K562 (cell line): ENCODE measurements at regions of chr19 and their contacts with region 1.

Region 1: DNA sequence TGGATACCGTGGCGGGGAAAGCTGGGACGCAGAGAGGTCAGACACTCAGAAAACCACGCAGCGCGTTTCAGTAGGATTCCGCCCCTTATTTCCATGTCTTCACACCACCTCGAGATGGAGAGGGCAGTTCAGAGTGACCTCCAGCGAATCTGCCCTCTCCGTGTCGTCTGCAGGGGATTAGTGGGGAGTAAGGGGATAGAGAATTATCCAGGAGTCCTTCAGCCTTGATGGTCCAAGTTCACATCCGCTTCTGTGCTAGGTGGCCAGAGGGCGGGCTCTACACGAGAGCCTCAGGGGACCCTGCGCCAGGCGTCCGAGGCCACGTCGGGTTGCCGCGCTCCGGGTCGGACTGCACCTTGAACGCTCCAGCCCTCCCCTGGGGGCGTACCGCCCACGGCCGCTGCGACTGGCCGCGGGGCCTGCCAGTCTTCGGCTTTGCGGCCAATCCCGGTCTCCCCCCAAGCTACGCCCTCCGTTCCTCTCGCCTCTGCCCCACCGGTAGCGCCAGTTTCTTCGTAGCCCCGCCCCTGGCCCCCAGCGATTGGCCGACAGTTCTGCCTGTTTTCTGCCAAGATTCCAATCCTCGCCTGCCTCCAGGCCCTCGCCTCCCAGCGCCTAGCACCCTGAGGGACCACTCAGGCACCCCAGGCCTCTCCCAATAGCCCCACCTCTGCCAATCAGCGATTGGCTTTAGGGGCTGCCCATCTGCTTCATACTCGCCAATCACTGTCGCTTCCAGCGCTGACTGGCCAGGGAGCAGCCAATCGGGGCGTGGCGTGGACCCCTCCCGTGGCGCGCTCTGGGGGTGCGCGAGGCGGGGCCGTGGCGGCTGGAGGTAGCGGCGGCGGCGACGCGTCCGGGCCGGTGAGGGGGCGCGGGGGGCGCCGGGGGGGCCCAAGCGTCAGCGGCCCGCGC is at the start of gene SLC25A42:
- DNase-seq: peak; percentile 97 to 99 (median 98)
- ATAC-seq: peak; percentile 87
- H3K4me3 ChIP-seq: peak within 1 kb of the TSS; percentile 74
- H3K27ac ChIP-seq: peak within 1 kb of the TSS; percentile 89
- H3K4me1 ChIP-seq: peaks cover 57 to 73% of the 10 kb centered on the region in 2 experiments
- H3K27me3 ChIP-seq: no peaks in the 10 kb centered on the region; a peak in 1 of 5 replicates
- CTCF ChIP-seq: no peak
- EP300 ChIP-seq: no peak
- POLR2A ChIP-seq: peak; percentile 84
- RAD21 ChIP-seq: no peak; a peak in 1 of 4 replicates
- polyA plus RNA-seq, gene SLC25A42: 0.59 to 2.0 TPM

Region 2: GRCh38 chr19:18771328-18772242 is 291.9 kb before region 1 on chr19:
- CTCF ChIA-PET with region 1: no interaction called
- POLR2A ChIA-PET with region 1: no interaction called
- in situ Hi-C with region 1: no loop called
- intact Hi-C with region 1: no loop called
- DNase-seq: peak in 3 of 4 experiments; percentile 50 to 63 (median 63)
- ATAC-seq: peak; percentile 86
- H3K4me3 ChIP-seq: no peak overlapping the region
- H3K27ac ChIP-seq: no peak overlapping the region
- H3K4me1 ChIP-seq: peaks cover 0 to 66% of the 10 kb centered on the region in 2 experiments; a peak in 4 of 5 replicates
- H3K27me3 ChIP-seq: peaks cover 9 to 40% of the 10 kb centered on the region in 2 experiments; a peak in 4 of 5 replicates
- CTCF ChIP-seq: peak; percentile 72
- EP300 ChIP-seq: no peak
- POLR2A ChIP-seq: no peak
- RAD21 ChIP-seq: peak; percentile 44 to 63

Region 3: GRCh38 chr19:19033426-19034203 is 29.8 kb before region 1 on chr19 and contains the starts of genes ARMC6 and SUGP2:
- CTCF ChIA-PET with region 1: no interaction called
- POLR2A ChIA-PET with region 1: no interaction called
- in situ Hi-C with region 1: no loop called
- intact Hi-C with region 1: loop called (anchors 1 kb)
- DNase-seq: peak; percentile 93 to 98 (median 97)
- ATAC-seq: peak; percentile 88
- H3K4me3 ChIP-seq: peak within 1 kb of the TSS; percentile 98
- H3K27ac ChIP-seq: peak within 1 kb of the TSS; percentile 99
- H3K4me1 ChIP-seq: peaks cover 4 to 30% of the 10 kb centered on the region in 2 experiments; a peak in 3 of 5 replicates
- H3K27me3 ChIP-seq: no peaks in the 10 kb centered on the region
- CTCF ChIP-seq: peak in 1 of 3 experiments; percentile 8; a peak in 1 of 6 replicates
- EP300 ChIP-seq: peak; percentile 7; the same call in 1 of the 2 replicates
- POLR2A ChIP-seq: peak; percentile 69; the same call in 1 of the 2 replicates
- RAD21 ChIP-seq: no peak
- polyA plus RNA-seq, gene ARMC6: 2.1 to 5.4 TPM
- polyA plus RNA-seq, gene SUGP2: 13.1 to 22.6 TPM

Region 4: DNA sequence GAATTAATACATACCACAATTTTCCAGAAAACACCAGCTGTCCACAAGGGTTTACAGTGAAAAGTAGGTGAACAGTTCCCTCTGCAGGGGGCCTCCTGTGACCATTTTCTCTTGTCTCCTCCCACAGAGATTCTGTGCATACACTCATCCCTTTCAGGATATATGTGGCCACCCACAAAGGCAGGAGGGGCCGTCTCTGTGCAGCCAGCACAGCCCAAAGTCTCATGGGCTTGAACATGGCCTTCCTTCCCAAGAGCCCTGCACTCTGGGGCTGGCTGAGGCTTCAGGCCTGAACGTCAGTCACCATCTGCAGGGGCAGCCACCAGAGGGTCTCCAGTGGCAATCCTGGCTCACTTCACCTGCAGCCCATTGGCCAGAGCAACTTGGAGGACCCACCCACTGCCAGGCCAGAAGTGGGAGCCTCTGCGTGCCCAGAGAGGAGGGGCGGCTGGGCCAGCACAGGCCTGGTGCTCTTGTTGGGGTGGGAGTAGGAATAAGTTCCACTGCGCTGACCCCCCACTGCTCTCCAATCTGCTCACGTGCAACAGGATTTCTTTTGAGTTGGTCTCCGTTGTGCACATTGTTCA is 49.7 kb after region 1 on chr19:
- CTCF ChIA-PET with region 1: no interaction called
- POLR2A ChIA-PET with region 1: interaction called, 4 read pairs
- in situ Hi-C with region 1: no loop called
- intact Hi-C with region 1: loop called (anchors 2 kb)
- DNase-seq: peak; percentile 50 to 72 (median 60)
- ATAC-seq: peak; percentile 87
- H3K4me3 ChIP-seq: no peak overlapping the region
- H3K27ac ChIP-seq: no peak overlapping the region
- H3K4me1 ChIP-seq: peaks cover 12 to 31% of the 10 kb centered on the region in 2 experiments; a peak in 4 of 5 replicates
- H3K27me3 ChIP-seq: no peaks in the 10 kb centered on the region
- CTCF ChIP-seq: peak; percentile 54 to 69 (median 68)
- EP300 ChIP-seq: no peak
- POLR2A ChIP-seq: peak; percentile 44
- RAD21 ChIP-seq: peak; percentile 60 to 71